CD4-positive, alpha-beta memory T cell (primary cell): ENCODE measurements at regions of chr10 and their contacts with region 1.

Region 1: DNA sequence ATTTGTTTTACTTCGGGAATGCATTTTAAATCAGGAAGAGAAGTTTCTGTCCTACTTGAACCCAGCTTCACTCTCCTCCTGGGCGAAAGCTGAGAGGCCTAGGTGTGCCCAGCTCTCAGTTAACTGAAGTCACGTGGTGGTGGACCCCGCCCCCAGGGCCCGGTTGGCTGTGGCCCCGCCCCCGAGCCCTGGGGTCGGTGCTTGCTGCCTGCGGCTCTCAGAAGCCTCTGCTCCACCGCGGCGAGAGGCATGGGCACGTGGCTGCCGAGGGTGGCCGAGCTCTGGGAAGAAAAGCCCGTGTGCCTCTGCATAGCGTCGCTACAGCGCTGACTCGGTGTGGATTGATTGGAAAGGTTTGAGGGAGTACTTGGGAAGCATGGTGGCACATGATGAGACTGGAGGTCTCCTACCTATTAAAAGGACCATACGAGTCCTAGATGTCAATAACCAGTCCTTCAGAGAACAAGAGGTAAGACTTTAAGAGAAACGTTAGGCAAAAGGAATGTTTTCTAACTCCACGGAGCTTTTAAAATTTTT is 34.1 kb downstream of the NET1 start:
- DNase-seq: peak; percentile 46 to 72 (median 56)
- H3K4me3 ChIP-seq: peak overlapping the region in 1 of 2 donors; percentile 10
- H3K4me3 Mint-ChIP-seq: peak overlapping the region; percentile 81 to 90 (median 86)
- H3K27ac ChIP-seq: no peak overlapping the region
- H3K27ac Mint-ChIP-seq: peak overlapping the region; percentile 45 to 93 (median 85)
- H3K4me1 ChIP-seq: peaks cover 23% of the 10 kb centered on the region
- H3K4me1 Mint-ChIP-seq: peaks cover 13 to 40% (median 27%) of the 10 kb centered on the region in 4 donors
- H3K27me3 ChIP-seq: no peaks in the 10 kb centered on the region
- H3K27me3 Mint-ChIP-seq: no peaks in the 10 kb centered on the region

Region 2: GRCh38 chr10:5216801-5217200 is 229.7 kb before region 1 on chr10:
- CTCF ChIA-PET with region 1: no interaction called
- POLR2A ChIA-PET with region 1: no interaction called
- intact Hi-C with region 1: no loop called
- DNase-seq: no peak
- H3K4me3 ChIP-seq: no peak overlapping the region
- H3K4me3 Mint-ChIP-seq: no peak overlapping the region
- H3K27ac ChIP-seq: no peak overlapping the region
- H3K27ac Mint-ChIP-seq: no peak overlapping the region
- H3K4me1 ChIP-seq: no peaks in the 10 kb centered on the region
- H3K4me1 Mint-ChIP-seq: no peaks in the 10 kb centered on the region
- H3K27me3 ChIP-seq: no peaks in the 10 kb centered on the region
- H3K27me3 Mint-ChIP-seq: peaks cover 0 to 3% of the 10 kb centered on the region in 2 donors

Region 3: DNA sequence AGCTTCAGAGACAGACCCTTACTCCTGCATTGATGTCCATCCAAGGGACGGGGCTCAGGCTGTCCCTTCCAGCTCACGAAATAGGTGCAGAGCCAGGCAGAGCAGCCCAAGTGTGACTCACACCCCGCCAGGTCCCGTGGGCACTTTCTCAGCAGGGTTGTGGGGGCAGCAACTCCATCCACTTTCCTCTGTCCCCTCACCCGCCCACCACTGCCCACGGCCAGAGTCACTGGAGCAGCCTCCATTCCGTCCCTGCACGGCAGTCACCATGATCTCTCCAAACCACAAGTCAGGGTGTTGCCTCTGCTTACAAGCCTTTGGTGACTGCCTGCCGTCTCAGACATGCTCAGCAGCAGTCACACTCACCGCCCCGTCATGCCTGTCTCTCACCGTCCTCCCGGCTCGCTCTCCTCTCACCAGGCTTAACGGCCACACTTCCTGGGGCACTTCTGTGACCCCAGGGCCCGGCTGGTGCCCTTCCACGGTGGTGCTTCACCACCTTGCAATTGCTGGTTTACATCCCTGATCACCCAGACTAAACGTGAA is 117.6 kb after region 1 on chr10:
- CTCF ChIA-PET with region 1: interaction called, 4 read pairs
- POLR2A ChIA-PET with region 1: interaction called, 37 read pairs
- intact Hi-C with region 1: loop called (anchors 5 kb)
- DNase-seq: peak; percentile 52 to 67 (median 58)
- H3K4me3 ChIP-seq: peak overlapping the region; percentile 19 to 67
- H3K4me3 Mint-ChIP-seq: peak overlapping the region; percentile 81 to 95 (median 86)
- H3K27ac ChIP-seq: peak overlapping the region; percentile 61
- H3K27ac Mint-ChIP-seq: peak overlapping the region; percentile 96 to 99 (median 98)
- H3K4me1 ChIP-seq: peaks cover 33% of the 10 kb centered on the region
- H3K4me1 Mint-ChIP-seq: peaks cover 29 to 49% (median 35%) of the 10 kb centered on the region in 4 donors
- H3K27me3 ChIP-seq: no peaks in the 10 kb centered on the region
- H3K27me3 Mint-ChIP-seq: peaks cover 0 to 3% of the 10 kb centered on the region in 2 donors

Region 4: GRCh38 chr10:5614155-5614721 is 167.8 kb after region 1 on chr10:
- CTCF ChIA-PET with region 1: interaction called, 468 read pairs
- POLR2A ChIA-PET with region 1: no interaction called
- intact Hi-C with region 1: loop called (anchors 5 kb)
- DNase-seq: no peak
- H3K4me3 ChIP-seq: no peak overlapping the region
- H3K4me3 Mint-ChIP-seq: no peak overlapping the region
- H3K27ac ChIP-seq: no peak overlapping the region
- H3K27ac Mint-ChIP-seq: no peak overlapping the region
- H3K4me1 ChIP-seq: no peaks in the 10 kb centered on the region
- H3K4me1 Mint-ChIP-seq: peaks cover 0 to 2% (median 0%) of the 10 kb centered on the region in 4 donors
- H3K27me3 ChIP-seq: no peaks in the 10 kb centered on the region
- H3K27me3 Mint-ChIP-seq: no peaks in the 10 kb centered on the region